ENCODE measurements at regions of chr2 and their contacts with region 1.

Region 1: GRCh38 chr2:12685145-12685544 is 31.6 kb upstream of the TRIB2 start:
- DNase-seq: no peak
- ATAC-seq: no peak
- H3K4me3 ChIP-seq: no peak overlapping the region
- H3K27ac ChIP-seq: no peak overlapping the region
- H3K4me1 ChIP-seq: peaks cover 5% of the 10 kb centered on the region; the same call in 1 of the 2 replicates
- H3K27me3 ChIP-seq: no peaks in the 10 kb centered on the region
- CTCF ChIP-seq: no peak

Region 2: DNA sequence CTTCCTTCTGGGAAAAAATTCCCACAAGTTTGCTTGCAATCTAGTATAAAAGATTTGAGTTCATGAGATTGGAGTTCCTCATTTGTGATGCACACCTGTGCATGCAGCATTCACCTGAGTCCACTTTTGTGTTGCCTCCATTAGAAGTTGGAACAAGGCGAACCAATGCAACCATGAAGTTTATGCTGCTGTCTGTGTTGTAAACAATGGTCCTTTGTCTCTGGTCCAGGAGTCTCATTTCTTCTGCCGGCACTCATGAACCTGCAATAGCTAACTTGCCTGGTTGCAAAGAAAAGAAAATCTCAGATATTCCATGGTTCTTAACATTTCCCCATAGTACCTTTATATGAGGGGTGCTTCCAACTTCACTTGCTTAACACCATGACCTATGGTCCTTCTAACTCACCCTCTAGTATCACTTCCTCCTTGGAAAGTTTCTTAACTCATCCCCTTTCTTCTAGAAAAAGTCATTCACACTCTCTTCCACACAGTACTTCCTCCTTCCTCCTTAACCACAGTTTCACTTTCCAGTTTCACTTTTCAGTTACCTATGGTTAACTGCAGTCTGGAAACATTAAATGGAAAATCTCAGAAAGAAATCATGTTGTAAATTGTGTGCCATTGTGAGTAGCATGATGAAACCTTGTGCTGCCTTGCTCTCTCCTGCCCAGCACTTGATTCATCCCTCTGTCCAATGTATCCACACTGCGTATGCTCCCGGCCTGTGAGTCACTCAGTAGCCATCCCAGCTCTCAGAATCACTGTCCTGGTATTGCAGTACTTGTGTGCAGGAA is 97.2 kb before region 1 on chr2:
- CTCF ChIA-PET with region 1: no interaction called
- POLR2A ChIA-PET with region 1: interaction called, 16 read pairs
- in situ Hi-C with region 1: no loop called
- intact Hi-C with region 1: no loop called
- DNase-seq: peak; percentile 62
- ATAC-seq: peak; percentile 87
- H3K4me3 ChIP-seq: peak overlapping the region in 1 of 2 experiments; percentile 2; a peak in 1 of 4 replicates
- H3K27ac ChIP-seq: peak overlapping the region; percentile 25; the same call in 1 of the 2 replicates
- H3K4me1 ChIP-seq: no peaks in the 10 kb centered on the region
- H3K27me3 ChIP-seq: no peaks in the 10 kb centered on the region
- CTCF ChIP-seq: no peak

Measured in Panc1 (cell line).